ENCODE measurements at regions of chr1 and their contacts with region 1.

Region 1: DNA sequence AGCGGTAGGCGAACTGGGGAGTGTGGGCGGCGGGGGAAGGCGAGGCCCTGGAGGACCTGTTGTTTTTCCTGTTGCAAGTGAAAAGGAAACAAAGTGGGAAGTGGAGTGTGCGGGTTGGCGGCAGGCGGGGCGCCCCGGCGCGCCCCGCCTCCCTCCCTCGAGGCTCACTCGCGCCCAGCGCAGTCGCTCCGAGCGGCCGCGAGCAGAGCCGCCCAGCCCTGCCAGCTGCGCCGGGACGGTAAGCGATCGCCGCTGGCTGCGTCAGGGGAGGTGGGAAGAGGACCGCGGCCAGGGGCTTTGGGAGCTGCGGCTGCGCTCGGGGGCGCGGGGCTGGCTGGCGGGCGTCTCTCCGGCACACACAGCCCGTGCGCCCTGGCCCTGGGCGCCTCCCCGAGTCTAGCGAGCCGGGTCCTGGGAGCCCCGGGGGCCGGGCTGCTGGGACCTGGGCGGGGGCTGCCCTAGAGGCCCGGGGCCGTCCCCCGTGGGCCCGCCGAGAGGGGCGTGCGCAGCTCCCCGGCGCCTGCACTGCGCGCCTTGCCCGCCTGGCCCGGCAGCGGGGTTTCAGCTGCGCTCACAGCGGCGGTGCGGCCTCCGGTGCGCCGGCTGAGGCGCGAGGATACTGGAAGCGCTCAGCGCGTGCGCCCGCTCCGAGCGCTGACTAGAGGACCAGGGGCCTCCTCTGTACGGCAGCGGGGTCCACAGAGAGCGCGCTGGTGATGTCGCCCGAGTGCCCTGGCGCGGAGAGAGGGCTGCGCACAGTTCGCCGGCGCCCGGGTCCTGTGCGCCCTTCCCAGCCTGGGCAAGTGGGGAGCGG is at the start of gene PIK3CD:
- DNase-seq: peak; percentile 25
- H3K4me3 ChIP-seq: peak within 1 kb of the TSS; percentile 37 to 49 (median 40)
- H3K27ac ChIP-seq: no peak within 1 kb of the TSS
- H3K4me1 ChIP-seq: no peaks in the 10 kb centered on the region
- H3K27me3 ChIP-seq: peaks cover 4% of the 10 kb centered on the region
- CTCF ChIP-seq: no peak
- total RNA-seq, gene PIK3CD: 6.3 to 19.1 TPM

Region 2: DNA sequence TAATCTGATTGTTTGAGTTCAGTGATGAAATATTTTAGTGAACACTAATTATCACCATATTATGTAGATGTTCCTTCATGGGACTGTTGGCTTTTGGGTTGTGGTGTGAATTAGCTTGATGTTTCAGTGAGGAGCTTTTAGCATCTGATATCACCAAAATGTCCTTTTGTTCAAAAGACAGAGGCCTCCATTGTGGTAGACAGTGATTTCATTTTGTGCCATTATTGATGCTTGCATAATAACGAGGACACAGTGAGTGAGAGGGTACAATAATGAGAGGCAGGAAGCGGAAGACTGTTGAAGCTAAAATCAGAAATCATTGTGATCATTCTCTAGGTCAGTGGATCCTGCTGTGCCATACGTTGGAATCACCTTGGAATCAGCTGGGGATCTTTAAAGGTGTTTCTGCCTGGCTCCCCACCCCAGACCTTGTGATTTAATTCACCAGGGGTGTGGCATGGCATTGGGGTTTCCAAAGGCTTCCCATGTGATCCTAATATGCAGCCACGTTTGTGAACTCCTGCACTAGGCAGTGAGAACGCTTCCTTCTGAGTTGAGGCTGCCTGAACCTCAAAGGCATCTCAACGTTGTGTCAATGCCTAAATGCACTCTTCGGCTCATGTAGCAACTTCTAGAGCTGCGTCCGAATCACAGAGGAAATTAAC is 476.5 kb after region 1 on chr1:
- CTCF ChIA-PET with region 1: no interaction called
- dilution Hi-C with region 1: loop called (anchors 10 kb)
- in situ Hi-C with region 1: no loop called
- intact Hi-C with region 1: no loop called
- DNase-seq: no peak
- H3K4me3 ChIP-seq: no peak overlapping the region
- H3K27ac ChIP-seq: no peak overlapping the region
- H3K4me1 ChIP-seq: no peaks in the 10 kb centered on the region
- H3K27me3 ChIP-seq: no peaks in the 10 kb centered on the region
- CTCF ChIP-seq: no peak